ENCODE measurements at regions of chr19 and their contacts with region 1.

Region 1: DNA sequence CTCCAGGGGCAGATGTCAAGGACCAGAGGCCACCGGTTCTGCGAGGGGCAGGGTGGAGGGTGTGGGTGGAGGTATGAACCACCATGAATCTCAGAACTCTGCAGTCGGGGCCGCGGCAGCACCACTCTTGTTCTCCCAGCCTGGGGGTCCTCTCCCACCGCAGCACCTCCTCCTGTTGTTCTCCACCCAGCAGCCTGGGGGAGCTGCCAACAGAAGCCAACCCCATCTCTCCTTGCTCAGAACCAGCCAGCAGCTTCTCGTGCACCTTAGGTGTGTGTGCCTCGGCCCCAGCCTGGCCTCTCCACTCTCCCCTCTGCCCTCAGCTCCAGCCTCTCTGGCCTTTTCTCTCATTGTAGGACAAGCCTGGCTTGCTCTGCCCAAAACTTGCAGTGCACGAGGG is 31.9 kb upstream of the CCNE1 start:
- DNase-seq: no peak
- ATAC-seq: no peak
- H3K4me3 ChIP-seq: no peak overlapping the region
- H3K27ac ChIP-seq: no peak overlapping the region
- H3K4me1 ChIP-seq: no peaks in the 10 kb centered on the region
- H3K27me3 ChIP-seq: no peaks in the 10 kb centered on the region
- CTCF ChIP-seq: no peak

Region 2: GRCh38 chr19:29806098-29806866 is 26.4 kb after region 1 on chr19:
- intact Hi-C with region 1: loop called in 1 of 2 experiments (anchors 2 kb)
- DNase-seq: peak; percentile 45 to 72
- ATAC-seq: peak in 3 of 4 donors; percentile 43 to 65 (median 50)
- H3K4me3 ChIP-seq: no peak overlapping the region
- H3K27ac ChIP-seq: no peak overlapping the region
- H3K4me1 ChIP-seq: no peaks in the 10 kb centered on the region
- H3K27me3 ChIP-seq: no peaks in the 10 kb centered on the region
- CTCF ChIP-seq: no peak

Region 3: GRCh38 chr19:29966588-29967249 is 186.8 kb after region 1 on chr19:
- intact Hi-C with region 1: no loop called
- DNase-seq: no peak
- ATAC-seq: peak in 2 of 4 donors; percentile 42 to 51
- H3K4me3 ChIP-seq: no peak overlapping the region
- H3K27ac ChIP-seq: no peak overlapping the region
- H3K4me1 ChIP-seq: peaks cover 67% of the 10 kb centered on the region
- H3K27me3 ChIP-seq: no peaks in the 10 kb centered on the region
- CTCF ChIP-seq: no peak

Region 4: GRCh38 chr19:30153326-30154210 is 373.6 kb after region 1 on chr19:
- intact Hi-C with region 1: no loop called
- DNase-seq: peak in 1 of 2 donors; percentile 7
- ATAC-seq: no peak
- H3K4me3 ChIP-seq: no peak overlapping the region
- H3K27ac ChIP-seq: no peak overlapping the region
- H3K4me1 ChIP-seq: no peaks in the 10 kb centered on the region
- H3K27me3 ChIP-seq: peaks cover 0 to 3% (median 0%) of the 10 kb centered on the region in 3 donors
- CTCF ChIP-seq: no peak

Measured in psoas muscle (tissue), 8 donors.